ENCODE measurements at regions of chr10 and their contacts with region 1.

Region 1: GRCh38 chr10:63465293-63466143 is at the start of gene JMJD1C:
- DNase-seq: peak; percentile 91
- ATAC-seq: peak; percentile 93
- total RNA-seq, gene JMJD1C: 38.1 TPM

Region 2: DNA sequence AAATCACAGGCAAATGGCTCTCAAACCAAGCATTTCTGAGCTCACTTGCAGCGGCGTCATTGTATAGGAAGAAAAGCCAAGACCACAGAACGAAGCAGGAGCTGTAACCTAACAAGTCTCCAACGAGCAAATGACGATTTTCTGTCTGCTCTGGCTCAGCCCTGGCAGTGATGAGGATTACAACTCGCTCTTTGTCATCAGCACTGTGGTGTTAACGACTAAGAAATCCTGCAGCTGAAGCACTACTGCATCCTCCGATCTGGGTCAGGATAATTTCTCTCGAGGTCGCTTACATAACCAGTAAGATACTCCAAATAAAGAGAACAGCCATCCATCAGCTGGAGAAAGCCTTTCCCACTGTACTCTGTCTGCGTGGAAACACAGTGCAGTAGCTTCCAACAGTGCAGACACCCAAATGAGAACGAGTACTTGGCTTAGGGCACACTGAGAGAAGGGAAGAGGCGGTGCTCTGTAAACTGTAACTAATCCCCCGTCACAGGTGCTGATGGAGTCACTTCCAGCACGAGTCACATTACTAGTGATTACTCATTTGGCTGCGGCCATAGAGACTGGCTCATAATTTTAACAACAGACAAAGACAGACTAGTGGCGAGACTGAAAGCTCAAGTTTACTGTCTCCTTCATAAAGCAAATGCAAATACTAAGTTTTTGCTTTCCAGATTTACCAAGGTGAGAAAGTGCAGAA is 196.6 kb before region 1 on chr10:
- intact Hi-C with region 1: loop called (anchors 5 kb)
- DNase-seq: peak; percentile 79
- ATAC-seq: peak; percentile 98

Region 3: DNA sequence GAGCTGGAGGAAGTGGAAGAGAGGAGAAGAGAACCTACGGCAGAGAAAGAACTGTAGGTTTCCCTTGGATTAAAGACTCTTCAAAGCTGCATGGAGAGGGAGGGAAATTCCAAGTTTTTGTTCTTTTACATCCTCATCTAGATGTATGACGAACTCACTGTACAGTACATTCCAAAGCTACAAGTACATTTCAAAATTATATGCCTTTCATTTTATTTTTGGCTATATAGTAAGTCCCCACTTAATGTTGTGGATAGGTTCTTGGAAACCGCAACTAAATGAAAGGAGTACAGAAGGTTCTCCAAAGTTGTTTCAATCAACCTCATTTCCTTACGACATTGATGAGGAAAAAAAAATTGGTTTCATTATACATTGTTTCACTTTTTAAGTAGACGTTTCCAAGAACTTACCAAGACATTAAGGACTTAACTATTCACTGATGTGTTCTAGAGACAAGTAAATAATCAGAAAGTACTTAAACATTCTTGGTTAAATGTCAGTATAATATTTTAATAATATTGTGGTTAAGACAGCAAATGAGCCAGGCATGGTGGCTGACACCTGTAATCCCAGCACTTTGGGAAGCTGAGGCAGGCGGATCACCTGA is 16.4 kb after region 1 on chr10:
- intact Hi-C with region 1: no loop called
- DNase-seq: no peak
- ATAC-seq: no peak

Measured in Right ventricle myocardium inferior (tissue), 1 donor.